ENCODE measurements at regions of chr2 and their contacts with region 1.

Region 1: GRCh38 chr2:54899576-54900200 is 150.6 kb downstream of the RTN4 start:
- DNase-seq: peak; percentile 53
- H3K4me3 ChIP-seq: no peak overlapping the region
- H3K27ac ChIP-seq: no peak overlapping the region
- H3K4me1 ChIP-seq: peaks cover 18% of the 10 kb centered on the region
- H3K27me3 ChIP-seq: no peaks in the 10 kb centered on the region
- CTCF ChIP-seq: peak; percentile 56 to 72

Region 2: GRCh38 chr2:54787755-54788366 is 111.8 kb before region 1 on chr2:
- CTCF ChIA-PET with region 1: no interaction called
- dilution Hi-C with region 1: no loop called
- in situ Hi-C with region 1: no loop called
- intact Hi-C with region 1: no loop called
- DNase-seq: no peak
- H3K4me3 ChIP-seq: no peak overlapping the region
- H3K27ac ChIP-seq: no peak overlapping the region
- H3K4me1 ChIP-seq: no peaks in the 10 kb centered on the region
- H3K27me3 ChIP-seq: no peaks in the 10 kb centered on the region
- CTCF ChIP-seq: no peak

Region 3: DNA sequence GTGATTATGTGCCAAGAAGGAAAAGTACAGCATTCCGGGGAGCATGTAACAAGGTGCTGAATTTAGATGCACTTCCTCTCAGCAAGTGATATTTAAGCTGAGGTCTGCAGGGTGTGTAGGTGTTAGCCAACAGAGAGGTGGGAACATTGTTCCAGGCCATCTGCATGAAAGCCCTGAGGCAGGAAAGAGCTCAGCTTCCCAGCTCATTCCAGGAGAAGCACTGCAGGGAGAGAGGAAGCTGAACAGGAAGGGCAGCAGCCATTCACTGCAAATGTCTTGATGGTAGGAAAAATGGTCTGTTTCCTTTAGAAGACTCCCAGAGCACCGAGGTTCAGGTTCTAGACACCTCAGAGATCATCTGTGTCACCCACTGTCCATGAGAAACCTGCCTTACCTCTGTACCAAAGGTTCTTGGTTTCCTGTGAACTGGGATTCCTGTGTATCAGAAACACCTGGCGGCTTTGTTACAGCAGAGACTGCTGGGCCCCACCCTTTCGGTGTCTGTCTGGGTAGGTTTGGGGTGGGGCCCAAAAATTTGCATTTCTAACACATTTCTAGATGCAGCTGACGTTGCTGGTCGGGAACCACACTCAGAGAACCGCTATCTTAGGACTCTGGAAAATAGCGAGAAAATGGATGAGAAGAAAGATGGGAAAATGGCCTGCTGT is 66.6 kb after region 1 on chr2:
- CTCF ChIA-PET with region 1: no interaction called
- dilution Hi-C with region 1: loop called (anchors 5 kb)
- in situ Hi-C with region 1: no loop called
- intact Hi-C with region 1: loop called (anchors 2 kb)
- DNase-seq: peak; percentile 58
- H3K4me3 ChIP-seq: no peak overlapping the region
- H3K27ac ChIP-seq: no peak overlapping the region
- H3K4me1 ChIP-seq: peaks cover 26% of the 10 kb centered on the region
- H3K27me3 ChIP-seq: no peaks in the 10 kb centered on the region
- CTCF ChIP-seq: no peak

Region 4: GRCh38 chr2:54977149-54977548 is 77.5 kb after region 1 on chr2:
- CTCF ChIA-PET with region 1: interaction called, 4 read pairs
- dilution Hi-C with region 1: no loop called
- in situ Hi-C with region 1: loop called in 1 of 2 experiments (anchors 10 kb)
- intact Hi-C with region 1: no loop called
- DNase-seq: no peak
- H3K4me3 ChIP-seq: no peak overlapping the region
- H3K27ac ChIP-seq: no peak overlapping the region
- H3K4me1 ChIP-seq: peaks cover 14% of the 10 kb centered on the region
- H3K27me3 ChIP-seq: no peaks in the 10 kb centered on the region
- CTCF ChIP-seq: no peak

Region 5: DNA sequence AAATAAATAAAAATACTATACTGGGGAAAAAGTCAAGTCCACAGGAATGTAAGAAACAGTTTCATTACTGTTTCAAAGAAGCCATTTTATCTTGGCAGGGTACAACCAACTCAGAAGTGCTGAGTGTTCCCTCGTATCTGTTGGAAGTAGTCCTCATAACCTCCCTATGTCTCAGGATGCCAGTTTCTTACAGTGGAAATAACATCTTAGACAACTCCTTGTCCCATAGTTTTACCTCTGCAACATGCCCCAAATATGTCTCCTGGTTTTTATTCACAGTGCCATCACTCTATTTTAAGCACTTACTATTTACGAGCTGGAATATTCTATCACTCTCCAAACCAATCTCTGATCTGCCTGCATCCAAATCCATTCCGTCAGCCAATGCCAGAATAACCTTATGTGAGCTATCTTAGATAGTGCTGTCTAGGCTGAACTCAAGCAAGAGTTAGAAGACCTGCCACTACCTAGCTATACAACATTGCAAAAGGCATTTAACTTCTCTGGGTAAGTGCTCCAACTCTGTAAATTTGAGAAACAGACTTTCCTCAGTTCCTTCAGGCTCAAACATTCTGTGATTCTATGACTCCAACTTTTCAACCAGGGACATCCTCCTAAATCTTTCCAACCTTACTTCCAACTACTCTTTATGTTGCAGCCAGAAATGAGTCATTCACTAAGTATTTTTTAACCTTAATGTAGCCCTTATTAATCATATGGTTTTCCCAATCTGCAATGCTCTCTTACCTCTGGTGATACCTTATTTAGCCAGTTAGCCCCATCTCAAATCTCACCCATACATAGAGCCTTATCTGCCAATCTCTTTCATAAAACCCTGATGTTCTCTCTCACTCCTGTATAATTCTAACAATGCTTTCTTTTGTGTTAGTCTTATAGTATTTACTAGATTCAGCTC is 83.9 kb after region 1 on chr2:
- CTCF ChIA-PET with region 1: interaction called, 4 read pairs
- dilution Hi-C with region 1: no loop called
- in situ Hi-C with region 1: loop called in 1 of 2 experiments (anchors 10 kb)
- intact Hi-C with region 1: loop called (anchors 1 kb)
- DNase-seq: peak; percentile 83
- H3K4me3 ChIP-seq: no peak overlapping the region
- H3K27ac ChIP-seq: peak overlapping the region; percentile 71
- H3K4me1 ChIP-seq: peaks cover 53% of the 10 kb centered on the region
- H3K27me3 ChIP-seq: no peaks in the 10 kb centered on the region
- CTCF ChIP-seq: no peak

Region 6: DNA sequence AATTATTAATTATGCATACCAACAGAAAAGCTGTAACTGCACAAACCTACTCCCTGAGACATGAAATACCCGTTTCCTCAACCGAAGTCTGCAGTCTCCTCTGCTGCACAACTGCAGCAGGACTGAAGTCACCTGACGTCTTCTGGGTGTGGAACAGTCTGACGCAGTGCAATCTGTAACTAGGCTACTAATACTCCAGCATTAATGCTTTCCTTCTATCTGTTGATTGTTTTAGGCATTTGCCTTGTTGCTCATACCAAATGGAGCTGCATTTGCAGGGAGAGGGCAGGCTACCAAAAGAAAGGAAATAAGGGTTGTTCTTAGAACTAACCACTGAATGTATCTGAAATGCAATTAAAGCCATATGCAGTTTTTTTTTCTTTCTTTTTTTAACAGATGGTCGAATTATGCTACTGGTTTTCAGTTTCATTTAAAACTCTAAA is 110.5 kb after region 1 on chr2:
- CTCF ChIA-PET with region 1: interaction called, 12 read pairs
- dilution Hi-C with region 1: no loop called
- in situ Hi-C with region 1: no loop called
- intact Hi-C with region 1: loop called (anchors 1 kb)
- DNase-seq: peak; percentile 85
- H3K4me3 ChIP-seq: peak overlapping the region; percentile 46 to 52 (median 50)
- H3K27ac ChIP-seq: peak overlapping the region; percentile 85
- H3K4me1 ChIP-seq: peaks cover 63% of the 10 kb centered on the region
- H3K27me3 ChIP-seq: no peaks in the 10 kb centered on the region
- CTCF ChIP-seq: no peak

Region 7: DNA sequence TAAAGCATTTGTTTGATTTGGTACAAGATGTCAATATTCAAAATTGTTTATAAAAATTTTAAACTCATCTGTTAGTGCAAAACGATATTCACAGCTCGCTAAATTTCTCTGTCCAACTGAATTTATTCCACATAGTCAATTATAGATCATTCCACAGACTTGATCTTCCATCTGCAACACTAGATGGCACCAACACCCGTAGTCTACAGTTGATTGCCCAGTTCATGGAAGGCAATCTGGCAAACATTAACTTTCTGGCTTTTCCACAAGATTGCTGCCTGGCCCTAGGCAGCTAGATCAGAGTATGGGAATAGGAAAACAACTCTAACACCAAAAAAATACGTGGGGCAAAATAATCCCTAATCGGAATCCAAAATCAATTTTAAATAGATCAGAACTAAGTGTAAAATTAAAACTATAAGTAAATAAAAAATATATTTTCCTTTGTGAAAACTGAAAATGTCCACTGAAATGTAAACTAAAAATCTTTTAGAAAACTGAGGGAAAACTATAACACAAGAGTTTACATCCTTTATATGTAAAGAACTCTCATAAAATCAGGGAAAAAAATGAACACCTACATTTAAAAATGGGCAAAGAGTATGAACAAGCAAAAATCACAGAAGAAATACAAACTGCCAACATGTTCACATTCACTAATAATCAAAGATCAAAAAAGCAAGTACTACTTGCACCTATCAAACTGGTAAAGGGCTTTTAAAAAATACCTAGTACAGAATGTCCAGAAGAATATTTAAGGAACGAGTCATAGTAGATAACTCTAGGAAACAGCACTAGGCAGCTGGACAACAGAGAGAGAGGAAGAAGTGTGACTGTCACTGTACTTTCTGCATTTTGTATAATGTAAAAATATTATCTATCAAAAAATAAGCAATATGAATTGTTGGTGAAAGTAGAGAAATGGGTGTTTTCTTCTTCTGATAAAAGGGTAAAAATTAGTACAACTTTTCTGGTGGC is 115.6 kb after region 1 on chr2:
- CTCF ChIA-PET with region 1: interaction called, 12 read pairs
- dilution Hi-C with region 1: no loop called
- in situ Hi-C with region 1: no loop called
- intact Hi-C with region 1: loop called (anchors 1 kb)
- DNase-seq: peak; percentile 57
- H3K4me3 ChIP-seq: peak overlapping the region in 1 of 3 experiments; percentile 7
- H3K27ac ChIP-seq: peak overlapping the region; percentile 22
- H3K4me1 ChIP-seq: peaks cover 63% of the 10 kb centered on the region
- H3K27me3 ChIP-seq: no peaks in the 10 kb centered on the region
- CTCF ChIP-seq: peak; percentile 66 to 76

Region 8: GRCh38 chr2:55168221-55169154 is 268.8 kb after region 1 on chr2:
- CTCF ChIA-PET with region 1: interaction called, 10 read pairs
- dilution Hi-C with region 1: no loop called
- in situ Hi-C with region 1: loop called (anchors 10 kb)
- intact Hi-C with region 1: loop called (anchors 1 kb)
- DNase-seq: peak; percentile 52
- H3K4me3 ChIP-seq: no peak overlapping the region
- H3K27ac ChIP-seq: no peak overlapping the region
- H3K4me1 ChIP-seq: peaks cover 4% of the 10 kb centered on the region
- H3K27me3 ChIP-seq: no peaks in the 10 kb centered on the region
- CTCF ChIP-seq: peak; percentile 82 to 84